Right lobe of liver (tissue), 6 donors: ENCODE measurements at regions of chr20 and their contacts with region 1.

Region 1: GRCh38 chr20:50558483-50558947 is 48.3 kb downstream of the PTPN1 start:
- DNase-seq: no peak
- ATAC-seq: peak in 3 of 4 donors; percentile 39 to 68 (median 49)
- H3K4me3 ChIP-seq: no peak overlapping the region
- H3K27ac ChIP-seq: no peak overlapping the region
- H3K4me1 ChIP-seq: peaks cover 0 to 5% (median 0%) of the 10 kb centered on the region in 4 donors
- H3K27me3 ChIP-seq: no peaks in the 10 kb centered on the region
- CTCF ChIP-seq: no peak
- POLR2A ChIP-seq: no peak

Region 2: DNA sequence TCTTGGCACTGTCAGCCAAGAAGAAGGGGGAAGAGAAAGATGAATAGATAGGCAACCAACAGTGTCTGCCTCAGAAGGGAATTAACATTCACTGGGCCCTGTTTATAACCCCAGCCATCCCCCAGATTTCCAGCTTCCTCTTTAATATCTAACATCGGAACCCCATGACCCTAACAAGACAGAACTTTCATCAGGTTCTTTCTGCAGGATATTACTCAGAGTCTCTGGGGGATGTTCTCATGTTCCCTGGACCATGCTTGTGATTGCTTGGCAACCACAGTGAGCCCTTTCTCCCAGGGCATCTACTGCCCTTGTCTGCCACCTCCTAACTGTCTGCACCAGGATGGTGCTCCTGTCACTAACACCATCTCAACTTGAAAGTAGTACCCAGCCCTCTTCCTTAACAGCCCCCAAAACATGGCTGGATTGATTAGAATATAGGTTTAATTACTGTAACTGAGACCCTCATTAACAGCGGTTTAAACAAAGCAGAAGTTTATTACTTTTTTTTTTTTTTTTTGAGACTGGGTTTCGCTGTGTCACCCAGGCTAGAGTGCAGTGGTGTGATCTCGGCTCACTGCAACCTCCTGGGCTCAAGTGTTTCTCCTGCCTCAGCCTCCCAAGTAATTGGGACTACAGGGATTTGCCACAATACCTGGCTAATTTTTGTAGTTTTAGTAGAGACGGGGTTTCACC is 60.3 kb before region 1 on chr20:
- intact Hi-C with region 1: loop called in 1 of 2 experiments (anchors 10 kb)
- DNase-seq: no peak
- ATAC-seq: peak; percentile 27 to 50 (median 36)
- H3K4me3 ChIP-seq: no peak overlapping the region
- H3K27ac ChIP-seq: no peak overlapping the region
- H3K4me1 ChIP-seq: peaks cover 0 to 3% (median 0%) of the 10 kb centered on the region in 4 donors
- H3K27me3 ChIP-seq: no peaks in the 10 kb centered on the region
- CTCF ChIP-seq: no peak
- POLR2A ChIP-seq: no peak